H1 (cell line): ENCODE measurements at regions of chr12 and their contacts with region 1.

Region 1: DNA sequence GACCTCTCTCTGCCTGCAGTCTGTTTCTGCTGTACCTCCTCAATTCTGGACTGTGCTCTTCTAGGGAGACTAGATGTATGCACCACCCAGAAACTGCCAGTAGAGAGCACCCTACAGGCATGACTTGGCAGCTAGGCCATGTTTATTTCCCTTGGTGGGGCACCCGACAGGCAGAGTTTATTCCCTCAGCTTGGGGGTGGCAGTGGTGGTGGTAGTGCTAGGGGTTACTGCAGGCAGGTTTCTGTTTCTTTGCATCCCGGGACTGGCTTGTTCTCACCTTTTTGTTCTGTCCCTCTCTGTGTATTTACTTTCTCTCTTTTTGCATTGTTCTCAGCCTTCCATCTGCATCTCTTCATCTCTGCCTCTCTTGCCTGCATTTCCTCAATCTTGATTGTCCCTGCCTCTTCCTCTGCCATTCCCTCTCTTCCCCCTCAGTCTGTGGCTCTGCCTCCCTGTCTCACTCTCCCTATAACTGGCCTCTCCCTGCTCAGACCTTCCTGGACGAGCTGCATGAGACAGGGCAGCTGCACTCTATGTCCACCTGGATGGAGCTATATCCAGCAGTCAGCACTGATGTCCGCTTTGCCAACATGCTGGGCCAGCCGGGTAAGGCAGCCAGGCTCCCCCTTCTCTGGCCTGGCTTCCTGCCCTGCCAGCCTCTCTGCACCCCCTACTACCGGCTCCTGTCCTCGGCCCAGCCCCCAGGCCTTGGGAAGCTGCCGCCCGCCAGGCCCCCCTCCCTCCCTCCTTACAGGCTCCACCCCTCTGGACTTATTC is 13.8 kb downstream of the PRPF40B start:
- DNase-seq: no peak
- H3K4me3 ChIP-seq: no peak overlapping the region
- H3K27ac ChIP-seq: no peak overlapping the region; the same call in 1 of the 2 replicates
- H3K4me1 ChIP-seq: peaks cover 0 to 10% (median 5%) of the 10 kb centered on the region in 4 experiments; a peak in 5 of 7 replicates
- H3K27me3 ChIP-seq: no peaks in the 10 kb centered on the region
- CTCF ChIP-seq: peak; percentile 64 to 84 (median 79)
- EP300 ChIP-seq: no peak
- POLR2A ChIP-seq: peak; percentile 37 to 62; a peak in 2 of 3 replicates
- RAD21 ChIP-seq: peak; percentile 68 to 80

Region 2: GRCh38 chr12:49623142-49623904 is 13.8 kb before region 1 on chr12 and contains the start of gene PRPF40B:
- CTCF ChIA-PET with region 1: interaction called, 58 read pairs
- POLR2A ChIA-PET with region 1: interaction called, 13 read pairs
- DNase-seq: peak; percentile 78 to 95
- H3K4me3 ChIP-seq: peak within 1 kb of the TSS; percentile 50 to 73 (median 66)
- H3K27ac ChIP-seq: peak within 1 kb of the TSS; percentile 56; the same call in 1 of the 2 replicates
- H3K4me1 ChIP-seq: peaks cover 0 to 7% (median 3%) of the 10 kb centered on the region in 4 experiments; a peak in 6 of 7 replicates
- H3K27me3 ChIP-seq: no peaks in the 10 kb centered on the region
- CTCF ChIP-seq: peak; percentile 47 to 56 (median 54)
- EP300 ChIP-seq: 0 out of 3 replicates have a peak, but pooled peaks of 1 of the 2 experiments have one; percentile 7
- POLR2A ChIP-seq: no peak; a peak in 1 of 3 replicates
- RAD21 ChIP-seq: peak; percentile 27 to 47; a peak in 3 of 4 replicates
- total RNA-seq, gene PRPF40B: 24.4 and 26.8 TPM in 2 replicates

Region 3: GRCh38 chr12:49662998-49663843 is 26.1 kb after region 1 on chr12:
- CTCF ChIA-PET with region 1: interaction called, 16 read pairs
- POLR2A ChIA-PET with region 1: interaction called, 3 read pairs
- DNase-seq: peak in 1 of 2 experiments; percentile 21
- H3K4me3 ChIP-seq: no peak overlapping the region
- H3K27ac ChIP-seq: no peak overlapping the region
- H3K4me1 ChIP-seq: peaks cover 3 to 6% (median 4%) of the 10 kb centered on the region in 4 experiments; a peak in 4 of 7 replicates
- H3K27me3 ChIP-seq: no peaks in the 10 kb centered on the region
- CTCF ChIP-seq: no peak
- EP300 ChIP-seq: no peak
- POLR2A ChIP-seq: no peak
- RAD21 ChIP-seq: no peak

Region 4: GRCh38 chr12:49707128-49707811 is 70.1 kb after region 1 on chr12 and contains the start of gene FMNL3:
- CTCF ChIA-PET with region 1: interaction called, 222 read pairs
- POLR2A ChIA-PET with region 1: interaction called, 23 read pairs
- DNase-seq: peak; percentile 77 to 99
- H3K4me3 ChIP-seq: peak within 1 kb of the TSS; percentile 53 to 82 (median 75)
- H3K27ac ChIP-seq: no peak within 1 kb of the TSS
- H3K4me1 ChIP-seq: peaks cover 3 to 27% (median 8%) of the 10 kb centered on the region in 4 experiments
- H3K27me3 ChIP-seq: peaks cover 1 to 9% (median 6%) of the 10 kb centered on the region in 4 experiments
- CTCF ChIP-seq: peak; percentile 87 to 96 (median 88)
- EP300 ChIP-seq: no peak
- POLR2A ChIP-seq: peak in 1 of 2 experiments; percentile 45; a peak in 2 of 3 replicates
- RAD21 ChIP-seq: peak; percentile 92 to 98
- total RNA-seq, gene FMNL3: 27.6 and 29.0 TPM in 2 replicates

Region 5: DNA sequence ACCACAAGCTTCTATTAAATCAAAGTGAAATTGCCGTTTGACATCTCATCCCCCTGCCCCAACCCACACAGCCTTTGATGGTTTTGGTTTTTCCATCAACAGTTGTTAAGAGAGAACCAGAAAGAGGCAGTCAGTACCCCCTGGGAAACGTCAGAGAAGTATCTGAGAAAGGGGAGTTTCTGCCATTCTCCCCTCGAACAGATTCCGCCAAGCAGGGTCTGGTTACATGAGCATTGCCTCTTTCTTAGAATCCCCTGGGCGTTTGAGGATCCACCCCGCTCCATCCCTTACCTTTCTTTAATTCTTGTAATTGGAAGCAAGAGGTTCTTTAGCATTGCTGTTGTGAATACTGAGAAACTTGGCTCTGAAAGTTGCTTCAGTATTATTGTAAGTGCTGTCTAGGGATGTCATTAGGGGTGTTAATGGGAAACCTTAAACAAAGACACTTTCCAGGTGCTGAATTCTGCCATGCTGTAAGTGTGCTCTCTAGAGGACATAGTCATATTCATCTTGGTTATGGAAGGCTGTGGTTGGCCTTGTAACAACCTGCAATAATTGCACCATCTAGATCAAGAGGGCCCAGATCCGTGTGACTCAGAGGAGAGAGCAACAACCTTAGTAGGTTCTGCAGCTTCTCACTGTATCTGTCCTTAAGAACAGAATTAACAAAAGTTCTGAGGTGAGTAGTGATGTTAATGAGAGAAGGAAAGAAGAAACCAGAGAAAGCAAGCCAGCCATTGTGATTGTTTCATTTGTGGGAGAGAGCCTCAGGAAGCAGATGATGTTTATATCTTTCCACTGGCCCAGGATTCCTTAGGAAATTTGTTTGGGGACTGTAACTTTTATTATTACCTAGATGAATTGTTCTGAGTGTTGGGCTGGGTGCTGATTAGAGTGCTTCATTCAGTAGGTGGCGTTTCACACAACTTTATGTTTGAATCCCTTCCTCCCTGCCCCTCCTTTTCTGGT is 113.1 kb after region 1 on chr12:
- CTCF ChIA-PET with region 1: interaction called, 18 read pairs
- POLR2A ChIA-PET with region 1: no interaction called
- DNase-seq: no peak
- H3K4me3 ChIP-seq: no peak overlapping the region; a peak in 1 of 8 replicates
- H3K27ac ChIP-seq: no peak overlapping the region
- H3K4me1 ChIP-seq: peaks cover 0 to 7% (median 3%) of the 10 kb centered on the region in 4 experiments; a peak in 3 of 7 replicates
- H3K27me3 ChIP-seq: no peaks in the 10 kb centered on the region; a peak in 1 of 7 replicates
- CTCF ChIP-seq: no peak
- EP300 ChIP-seq: no peak
- POLR2A ChIP-seq: no peak
- RAD21 ChIP-seq: no peak

Region 6: DNA sequence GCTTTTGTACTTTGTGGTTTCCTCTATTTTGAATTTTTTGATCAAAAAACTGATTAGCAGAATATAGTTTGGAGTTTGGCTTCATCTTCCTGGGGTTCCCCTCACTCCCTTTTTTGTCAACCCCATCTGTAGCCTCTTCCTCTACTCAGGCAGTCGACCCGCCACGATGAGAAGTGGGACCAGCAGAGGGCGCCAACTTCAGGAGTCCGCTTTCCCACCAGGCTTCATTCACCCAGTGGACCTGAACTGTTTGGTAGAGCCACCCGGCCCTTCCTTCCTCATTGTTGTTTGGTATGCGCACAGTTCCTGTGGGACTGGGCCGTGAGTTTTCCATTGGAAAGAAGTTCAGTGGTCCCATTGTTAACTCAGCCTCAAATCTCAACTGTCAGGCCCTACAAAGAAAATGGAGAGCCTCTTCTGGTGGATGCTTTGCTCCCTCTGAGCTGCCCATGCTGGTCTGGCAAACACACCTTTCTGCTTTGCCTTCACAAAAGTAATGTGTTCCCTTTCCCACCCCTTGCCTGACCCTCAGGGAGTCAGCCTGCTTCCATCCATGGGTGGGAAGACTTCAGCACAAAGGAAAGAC is 125.9 kb after region 1 on chr12:
- CTCF ChIA-PET with region 1: interaction called, 25 read pairs
- POLR2A ChIA-PET with region 1: interaction called, 5 read pairs
- DNase-seq: peak; percentile 38 to 92
- H3K4me3 ChIP-seq: no peak overlapping the region
- H3K27ac ChIP-seq: no peak overlapping the region
- H3K4me1 ChIP-seq: peaks cover 0 to 4% (median 0%) of the 10 kb centered on the region in 4 experiments; a peak in 1 of 7 replicates
- H3K27me3 ChIP-seq: no peaks in the 10 kb centered on the region
- CTCF ChIP-seq: peak; percentile 83 to 89 (median 87)
- EP300 ChIP-seq: no peak
- POLR2A ChIP-seq: no peak
- RAD21 ChIP-seq: peak; percentile 50 to 54; a peak in 3 of 4 replicates